Naive thymus-derived CD4-positive, alpha-beta T cell (primary cell): ENCODE measurements at regions of chr11 and their contacts with region 1.

Region 1: DNA sequence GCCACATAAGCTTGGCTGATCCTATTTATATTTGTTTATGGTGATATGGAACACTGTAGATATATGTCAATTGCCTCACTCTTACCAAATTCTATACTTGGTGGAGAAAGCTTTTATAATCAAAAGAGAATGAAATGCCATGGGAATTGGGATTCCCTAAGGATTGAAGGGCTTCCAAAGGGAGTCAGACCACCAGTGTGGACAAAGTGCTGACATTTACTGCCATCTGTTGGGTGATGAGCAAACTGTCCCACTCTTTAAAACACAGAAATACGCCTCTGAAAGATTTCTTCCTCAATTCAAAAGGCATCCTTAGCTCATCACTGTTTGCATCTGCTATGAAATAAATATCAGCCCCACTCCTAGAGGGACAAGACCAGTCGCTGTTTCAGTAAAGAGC is 7.1 kb downstream of the SLC1A2 start:
- DNase-seq: no peak
- ATAC-seq: no peak
- H3K4me3 ChIP-seq: no peak overlapping the region
- H3K4me3 Mint-ChIP-seq: no peak overlapping the region
- H3K27ac ChIP-seq: no peak overlapping the region
- H3K27ac Mint-ChIP-seq: no peak overlapping the region
- H3K4me1 ChIP-seq: no peaks in the 10 kb centered on the region
- H3K4me1 Mint-ChIP-seq: peaks cover 0 to 2% (median 0%) of the 10 kb centered on the region in 7 donors
- H3K27me3 ChIP-seq: peaks cover 5% of the 10 kb centered on the region in 2 donors
- H3K27me3 Mint-ChIP-seq: peaks cover 35 to 76% (median 48%) of the 10 kb centered on the region in 5 donors

Region 2: DNA sequence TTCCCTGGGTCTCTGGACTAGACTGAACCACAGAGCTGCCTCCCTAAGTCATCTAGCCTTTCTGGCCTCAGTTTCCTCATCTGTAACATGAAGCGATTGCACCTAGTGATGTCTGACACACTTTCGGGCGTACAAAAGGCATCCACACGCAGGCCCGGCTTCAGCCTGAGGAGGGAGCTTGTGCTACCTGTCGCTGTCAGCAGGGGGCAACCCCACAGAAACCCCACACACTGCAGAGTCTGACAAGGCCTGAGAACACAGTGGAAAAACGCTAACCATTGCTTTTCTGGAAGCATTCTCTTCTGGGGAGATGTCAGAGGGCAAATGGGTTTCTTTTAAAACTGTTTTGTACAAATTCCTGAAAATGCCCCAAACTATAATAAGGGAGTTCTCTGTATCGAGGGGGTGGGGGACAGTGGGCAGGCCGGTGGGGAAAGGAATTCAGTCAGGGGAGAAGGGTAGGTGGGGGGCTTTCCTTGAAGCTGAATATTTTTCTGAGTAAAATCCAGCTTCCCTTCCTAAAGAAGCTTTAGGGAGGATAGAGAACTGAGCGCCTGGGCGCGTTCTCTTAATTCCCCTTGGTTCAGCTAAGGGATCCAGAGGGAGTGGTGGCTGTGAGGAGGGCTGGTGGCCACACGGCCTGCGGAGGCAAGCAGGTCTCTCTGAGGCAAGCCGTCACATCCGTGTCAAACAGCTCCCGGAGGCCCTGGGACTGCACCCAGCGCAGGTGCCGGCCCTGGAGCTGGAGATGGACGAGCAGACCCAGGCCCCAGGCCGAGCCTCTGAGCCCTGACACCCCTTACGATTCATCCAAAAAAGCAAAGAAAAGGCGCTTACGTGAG is 899.2 kb before region 1 on chr11:
- CTCF ChIA-PET with region 1: no interaction called
- POLR2A ChIA-PET with region 1: no interaction called
- intact Hi-C with region 1: loop called in 1 of 2 experiments (anchors 1 kb)
- DNase-seq: peak in 8 of 9 donors; percentile 3 to 37 (median 25)
- ATAC-seq: peak; percentile 82
- H3K4me3 ChIP-seq: no peak overlapping the region
- H3K4me3 Mint-ChIP-seq: no peak overlapping the region
- H3K27ac ChIP-seq: no peak overlapping the region
- H3K27ac Mint-ChIP-seq: no peak overlapping the region
- H3K4me1 ChIP-seq: no peaks in the 10 kb centered on the region
- H3K4me1 Mint-ChIP-seq: peaks cover 0 to 2% (median 0%) of the 10 kb centered on the region in 7 donors
- H3K27me3 ChIP-seq: no peaks in the 10 kb centered on the region
- H3K27me3 Mint-ChIP-seq: peaks cover 0 to 13% (median 0%) of the 10 kb centered on the region in 5 donors

Region 3: DNA sequence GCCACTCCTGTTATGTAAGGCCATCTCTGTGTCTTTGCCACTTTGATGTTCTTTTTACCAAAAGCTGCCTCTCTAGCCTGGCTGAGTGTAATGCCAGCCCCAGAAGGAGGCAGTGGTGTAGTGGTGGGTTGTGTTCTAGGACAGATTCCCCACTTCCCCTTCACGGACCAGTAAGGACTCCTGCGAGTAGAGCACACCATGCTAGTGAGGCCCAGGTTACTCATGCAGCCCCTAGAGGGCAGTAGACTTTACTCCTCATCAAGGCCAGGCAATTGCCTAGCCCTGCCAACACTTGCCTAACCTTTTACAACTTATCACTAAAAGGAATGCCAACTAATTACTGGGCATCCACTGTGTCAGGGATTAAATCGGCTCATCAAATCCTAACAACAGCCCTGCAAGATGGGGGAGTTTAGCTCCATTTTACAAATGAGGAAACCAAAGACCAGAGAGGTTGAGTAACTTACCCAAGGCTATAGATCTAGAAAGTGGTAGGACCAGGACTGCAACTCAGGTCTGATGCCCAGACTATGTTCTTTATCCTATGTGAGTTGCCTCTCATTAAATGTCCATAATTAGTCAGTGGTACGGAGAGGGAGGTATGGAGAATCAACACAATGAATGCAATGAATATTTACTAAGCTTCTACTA is 571.4 kb before region 1 on chr11:
- CTCF ChIA-PET with region 1: no interaction called
- POLR2A ChIA-PET with region 1: no interaction called
- intact Hi-C with region 1: loop called in 1 of 2 experiments (anchors 2 kb)
- DNase-seq: peak in 5 of 9 donors; percentile 4 to 16 (median 8)
- ATAC-seq: peak; percentile 87
- H3K4me3 ChIP-seq: no peak overlapping the region
- H3K4me3 Mint-ChIP-seq: no peak overlapping the region
- H3K27ac ChIP-seq: no peak overlapping the region
- H3K27ac Mint-ChIP-seq: no peak overlapping the region
- H3K4me1 ChIP-seq: no peaks in the 10 kb centered on the region
- H3K4me1 Mint-ChIP-seq: no peaks in the 10 kb centered on the region
- H3K27me3 ChIP-seq: no peaks in the 10 kb centered on the region
- H3K27me3 Mint-ChIP-seq: peaks cover 12 to 33% (median 30%) of the 10 kb centered on the region in 5 donors

Region 4: DNA sequence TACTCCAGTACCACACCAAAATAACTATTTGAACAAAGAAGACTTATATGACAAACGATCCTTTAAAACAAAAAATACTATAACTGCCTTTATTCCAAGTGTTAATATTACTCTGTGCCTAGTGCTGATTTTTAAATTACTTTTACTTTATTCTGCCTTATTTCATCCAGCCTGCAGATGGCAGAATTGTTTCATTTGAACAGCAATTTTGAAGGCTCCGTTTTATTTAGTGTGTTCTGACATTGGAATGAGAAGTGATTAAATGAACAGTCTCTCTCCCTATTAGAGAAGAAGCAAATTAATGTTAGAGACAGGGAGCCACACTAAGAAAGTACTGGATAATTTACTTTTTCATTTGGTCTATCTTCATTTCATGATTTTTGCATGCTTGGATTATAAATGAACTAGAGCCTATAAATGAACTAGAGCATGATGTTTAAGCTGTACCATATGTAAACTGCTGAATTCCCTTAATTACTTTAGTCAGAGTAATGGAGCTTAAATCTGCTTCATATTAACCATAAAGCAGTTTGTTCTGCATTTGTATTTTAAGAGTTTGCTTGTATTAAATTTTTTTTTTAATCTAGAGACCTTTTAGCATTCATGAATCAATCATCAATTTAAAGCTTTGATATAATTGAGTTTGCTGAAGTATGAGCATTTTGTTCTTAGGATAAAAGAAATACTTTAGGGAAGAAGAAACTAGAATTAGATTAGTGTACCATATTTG is 486.0 kb before region 1 on chr11:
- CTCF ChIA-PET with region 1: interaction called, 3 read pairs
- POLR2A ChIA-PET with region 1: no interaction called
- intact Hi-C with region 1: loop called in 1 of 2 experiments (anchors 5 kb)
- DNase-seq: peak in 7 of 9 donors; percentile 18 to 61 (median 58)
- ATAC-seq: peak; percentile 80
- H3K4me3 ChIP-seq: no peak overlapping the region
- H3K4me3 Mint-ChIP-seq: no peak overlapping the region
- H3K27ac ChIP-seq: no peak overlapping the region
- H3K27ac Mint-ChIP-seq: peak overlapping the region in 1 of 9 donors; percentile 49
- H3K4me1 ChIP-seq: peaks cover 0 to 10% of the 10 kb centered on the region in 2 donors
- H3K4me1 Mint-ChIP-seq: peaks cover 10 to 54% (median 29%) of the 10 kb centered on the region in 7 donors
- H3K27me3 ChIP-seq: no peaks in the 10 kb centered on the region
- H3K27me3 Mint-ChIP-seq: no peaks in the 10 kb centered on the region

Region 5: DNA sequence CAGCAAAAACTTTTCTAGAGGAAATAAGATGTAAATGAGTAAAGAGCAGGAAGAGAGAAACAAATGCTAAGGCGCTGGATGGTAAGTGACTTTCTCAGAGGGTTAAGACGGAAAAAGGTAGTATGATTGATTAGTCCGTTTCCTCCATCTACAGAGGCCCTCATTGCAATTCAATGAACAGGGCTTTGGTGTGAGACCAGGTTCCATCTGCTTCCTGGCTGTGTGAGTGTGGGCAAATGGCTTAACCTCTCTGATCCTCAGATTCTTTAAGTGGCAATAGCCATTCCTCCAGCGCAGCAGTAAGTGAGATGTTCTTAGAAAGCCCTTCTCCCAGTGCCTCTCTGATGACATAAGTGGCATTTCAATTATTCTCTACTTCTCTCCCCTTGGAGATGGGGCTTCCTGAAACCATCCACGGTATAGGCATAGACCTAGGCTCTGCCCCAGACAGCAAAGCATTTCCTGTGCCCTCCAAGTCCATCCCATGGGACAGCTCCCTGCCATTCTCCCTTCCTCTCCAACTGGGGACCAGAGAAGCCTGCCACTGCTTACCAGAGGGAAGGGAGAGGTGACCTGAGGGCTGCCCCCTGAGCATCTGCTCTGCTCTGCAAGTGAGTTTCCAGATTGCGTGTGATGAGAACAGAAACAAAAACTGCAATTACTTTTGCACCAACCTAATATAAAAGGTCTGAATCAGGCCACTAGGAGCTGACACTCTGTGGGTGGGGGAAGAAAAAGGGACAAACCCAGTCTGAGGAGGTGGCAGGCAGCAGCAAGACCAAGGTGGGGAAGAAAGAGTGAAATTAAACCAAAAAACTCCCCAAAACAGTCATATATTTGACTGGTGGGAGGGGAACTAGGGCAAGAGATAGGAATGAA is 286.0 kb before region 1 on chr11:
- CTCF ChIA-PET with region 1: no interaction called
- POLR2A ChIA-PET with region 1: no interaction called
- intact Hi-C with region 1: no loop called
- DNase-seq: peak in 2 of 9 donors; percentile 27 to 62
- ATAC-seq: peak; percentile 59
- H3K4me3 ChIP-seq: peak overlapping the region; percentile 17
- H3K4me3 Mint-ChIP-seq: peak overlapping the region; percentile 42 to 69 (median 60)
- H3K27ac ChIP-seq: peak overlapping the region; percentile 12
- H3K27ac Mint-ChIP-seq: peak overlapping the region; percentile 44 to 92 (median 82)
- H3K4me1 ChIP-seq: peaks cover 33 to 49% of the 10 kb centered on the region in 2 donors
- H3K4me1 Mint-ChIP-seq: peaks cover 32 to 69% (median 64%) of the 10 kb centered on the region in 7 donors
- H3K27me3 ChIP-seq: no peaks in the 10 kb centered on the region
- H3K27me3 Mint-ChIP-seq: peaks cover 0 to 8% (median 0%) of the 10 kb centered on the region in 5 donors